Activated CD8-positive, alpha-beta T cell treated with anti-CD3 and anti-CD28 coated beads, Interleukin-2, amount 10 ng/mL, durations not matched to agents 7 days and 5 days (primary cell): ENCODE measurements at regions of chr20 and their contacts with region 1.

Region 1: DNA sequence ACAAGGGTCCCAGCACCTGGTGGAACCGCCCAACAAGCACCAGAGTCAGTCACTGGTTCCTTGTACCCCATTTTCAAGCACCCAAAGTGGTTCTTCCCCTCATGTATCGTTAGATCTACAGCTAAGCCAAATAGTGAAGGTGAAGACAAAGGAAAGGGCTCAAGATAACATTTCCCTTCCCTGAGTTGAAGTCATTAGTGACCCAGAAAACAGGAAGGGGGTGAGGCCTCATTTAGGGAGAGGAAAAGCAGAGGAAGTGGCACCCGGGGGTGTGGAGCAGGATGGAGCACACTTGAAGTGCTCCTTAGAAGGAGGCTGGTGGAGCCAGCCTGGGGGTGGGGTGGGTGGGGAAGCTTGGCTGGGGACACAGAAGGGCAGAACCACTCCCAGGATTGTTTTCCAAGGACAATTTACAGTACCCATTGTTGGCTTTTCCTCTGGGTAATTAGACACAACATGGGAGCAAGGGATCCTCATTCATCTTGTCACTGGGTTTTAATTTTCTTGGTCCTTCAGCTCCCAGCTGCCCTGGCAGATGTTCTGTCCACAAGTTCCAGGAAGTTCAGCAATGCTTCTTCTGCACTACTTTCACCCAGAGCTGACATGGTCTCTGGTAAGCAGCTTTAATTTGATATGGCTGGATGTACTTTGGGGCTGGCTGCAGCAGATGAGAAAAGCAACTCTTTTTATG is 73.3 kb upstream of the CD93 start:
- DNase-seq: no peak
- ATAC-seq: no peak
- H3K4me3 Mint-ChIP-seq: peak overlapping the region; percentile 5
- H3K27ac Mint-ChIP-seq: peak overlapping the region; percentile 14
- H3K4me1 Mint-ChIP-seq: peaks cover 25% of the 10 kb centered on the region
- H3K27me3 Mint-ChIP-seq: peaks cover 6% of the 10 kb centered on the region

Region 2: GRCh38 chr20:22729180-22729579 is 430.2 kb before region 1 on chr20:
- CTCF ChIA-PET with region 1: no interaction called
- POLR2A ChIA-PET with region 1: no interaction called
- DNase-seq: no peak
- ATAC-seq: no peak
- H3K4me3 Mint-ChIP-seq: no peak overlapping the region
- H3K27ac Mint-ChIP-seq: no peak overlapping the region
- H3K4me1 Mint-ChIP-seq: no peaks in the 10 kb centered on the region
- H3K27me3 Mint-ChIP-seq: no peaks in the 10 kb centered on the region

Region 3: GRCh38 chr20:23034721-23035671 is 124.4 kb before region 1 on chr20 and contains the start of gene SSTR4:
- CTCF ChIA-PET with region 1: no interaction called
- POLR2A ChIA-PET with region 1: no interaction called
- DNase-seq: no peak
- ATAC-seq: no peak
- H3K4me3 Mint-ChIP-seq: no peak within 1 kb of the TSS
- H3K27ac Mint-ChIP-seq: no peak within 1 kb of the TSS
- H3K4me1 Mint-ChIP-seq: no peaks in the 10 kb centered on the region
- H3K27me3 Mint-ChIP-seq: peaks cover 5% of the 10 kb centered on the region
- total RNA-seq, gene SSTR4: not detected

Region 4: GRCh38 chr20:23143098-23143497 is 16.3 kb before region 1 on chr20:
- CTCF ChIA-PET with region 1: interaction called, 11 read pairs
- POLR2A ChIA-PET with region 1: no interaction called
- DNase-seq: peak; percentile 61
- ATAC-seq: peak; percentile 72
- H3K4me3 Mint-ChIP-seq: no peak overlapping the region
- H3K27ac Mint-ChIP-seq: peak overlapping the region; percentile 74
- H3K4me1 Mint-ChIP-seq: peaks cover 43% of the 10 kb centered on the region
- H3K27me3 Mint-ChIP-seq: peaks cover 19% of the 10 kb centered on the region

Region 5: GRCh38 chr20:23225407-23226072 is 66.1 kb after region 1 on chr20:
- CTCF ChIA-PET with region 1: no interaction called
- POLR2A ChIA-PET with region 1: no interaction called
- DNase-seq: no peak
- ATAC-seq: no peak
- H3K4me3 Mint-ChIP-seq: no peak overlapping the region
- H3K27ac Mint-ChIP-seq: no peak overlapping the region
- H3K4me1 Mint-ChIP-seq: no peaks in the 10 kb centered on the region
- H3K27me3 Mint-ChIP-seq: no peaks in the 10 kb centered on the region

Region 6: GRCh38 chr20:23340524-23340923 is 181.1 kb after region 1 on chr20:
- CTCF ChIA-PET with region 1: no interaction called
- POLR2A ChIA-PET with region 1: no interaction called
- DNase-seq: peak; percentile 59
- ATAC-seq: no peak
- H3K4me3 Mint-ChIP-seq: no peak overlapping the region
- H3K27ac Mint-ChIP-seq: no peak overlapping the region
- H3K4me1 Mint-ChIP-seq: peaks cover 7% of the 10 kb centered on the region
- H3K27me3 Mint-ChIP-seq: no peaks in the 10 kb centered on the region